ENCODE measurements at regions of chr17 and their contacts with region 1.

Region 1: DNA sequence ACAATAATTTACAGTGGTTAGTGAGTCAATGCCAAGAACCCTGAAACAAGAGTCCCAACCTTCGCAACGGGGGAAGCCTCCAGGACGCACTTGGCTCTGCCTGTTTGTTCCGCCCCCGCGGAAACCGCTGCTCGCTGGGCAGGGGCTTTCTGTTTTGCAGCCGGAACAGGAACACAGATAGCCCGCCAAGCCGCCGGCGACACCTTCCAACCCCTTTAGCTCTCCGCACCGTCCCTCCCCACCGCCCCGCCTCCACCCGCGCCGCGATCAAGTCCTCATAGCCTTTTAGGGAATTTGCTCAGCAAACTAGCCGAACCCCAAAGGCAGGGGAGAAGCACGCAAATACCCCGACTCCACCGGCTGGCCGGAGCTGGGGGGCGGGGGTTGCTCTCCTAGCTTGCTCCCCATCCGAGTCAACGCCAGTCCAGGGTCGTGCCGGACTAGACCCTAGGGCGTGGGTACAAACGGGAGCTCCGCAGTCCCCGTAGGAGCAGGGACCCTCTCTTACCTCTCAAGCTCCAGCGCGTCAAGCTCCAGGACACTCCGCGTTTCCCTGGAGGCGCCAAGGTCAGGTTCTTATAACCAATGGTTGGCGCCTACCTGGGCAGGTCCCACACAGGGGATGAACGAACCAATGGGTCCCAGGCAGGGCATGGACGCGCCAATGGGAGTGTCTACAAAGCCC is at the start of gene SLFN13:
- DNase-seq: peak; percentile 59 to 89 (median 74)
- ATAC-seq: peak; percentile 94
- H3K4me3 ChIP-seq: peak within 1 kb of the TSS; percentile 57
- H3K4me3 Mint-ChIP-seq: peak within 1 kb of the TSS; percentile 75 to 94 (median 87)
- H3K27ac ChIP-seq: peak within 1 kb of the TSS; percentile 69
- H3K27ac Mint-ChIP-seq: peak within 1 kb of the TSS; percentile 76 to 94 (median 83)
- H3K4me1 ChIP-seq: peaks cover 7 to 14% of the 10 kb centered on the region in 2 donors
- H3K4me1 Mint-ChIP-seq: peaks cover 0 to 33% (median 26%) of the 10 kb centered on the region in 7 donors
- H3K27me3 ChIP-seq: no peaks in the 10 kb centered on the region
- H3K27me3 Mint-ChIP-seq: no peaks in the 10 kb centered on the region
- total RNA-seq, gene SLFN13: 10.5 to 64.7 (median 21.0) TPM

Region 2: GRCh38 chr17:34434052-34434451 is 1014.3 kb before region 1 on chr17:
- CTCF ChIA-PET with region 1: no interaction called
- POLR2A ChIA-PET with region 1: no interaction called
- intact Hi-C with region 1: no loop called
- DNase-seq: no peak
- ATAC-seq: peak; percentile 78
- H3K4me3 ChIP-seq: no peak overlapping the region
- H3K4me3 Mint-ChIP-seq: no peak overlapping the region
- H3K27ac ChIP-seq: no peak overlapping the region
- H3K27ac Mint-ChIP-seq: no peak overlapping the region
- H3K4me1 ChIP-seq: no peaks in the 10 kb centered on the region
- H3K4me1 Mint-ChIP-seq: peaks cover 0 to 2% (median 0%) of the 10 kb centered on the region in 7 donors
- H3K27me3 ChIP-seq: no peaks in the 10 kb centered on the region
- H3K27me3 Mint-ChIP-seq: peaks cover 0 to 10% (median 9%) of the 10 kb centered on the region in 5 donors

Region 3: DNA sequence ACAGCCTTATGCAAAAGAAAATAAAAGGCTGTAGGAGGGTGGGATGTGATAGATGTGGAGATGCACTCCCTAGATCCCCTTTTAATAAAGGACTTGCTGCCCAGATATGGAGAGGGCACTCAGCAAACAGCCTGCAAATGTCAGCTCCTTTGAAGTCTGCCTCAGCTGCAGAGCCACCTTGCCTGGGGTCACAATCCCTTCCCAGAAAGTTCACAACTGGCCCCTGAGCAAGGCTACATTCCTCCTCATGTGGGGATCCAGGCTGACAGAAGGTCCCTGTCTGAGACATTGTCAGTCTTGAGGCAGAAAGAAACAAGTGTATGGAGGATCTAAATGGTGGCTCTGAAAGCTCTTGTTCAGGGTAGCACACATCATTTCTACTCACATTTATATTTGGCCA is 111.0 kb before region 1 on chr17:
- CTCF ChIA-PET with region 1: no interaction called
- POLR2A ChIA-PET with region 1: no interaction called
- intact Hi-C with region 1: no loop called
- DNase-seq: no peak
- ATAC-seq: no peak
- H3K4me3 ChIP-seq: no peak overlapping the region
- H3K4me3 Mint-ChIP-seq: no peak overlapping the region
- H3K27ac ChIP-seq: no peak overlapping the region
- H3K27ac Mint-ChIP-seq: no peak overlapping the region
- H3K4me1 ChIP-seq: peaks cover 0 to 15% of the 10 kb centered on the region in 2 donors
- H3K4me1 Mint-ChIP-seq: peaks cover 9 to 21% (median 10%) of the 10 kb centered on the region in 7 donors
- H3K27me3 ChIP-seq: no peaks in the 10 kb centered on the region
- H3K27me3 Mint-ChIP-seq: peaks cover 0 to 39% (median 0%) of the 10 kb centered on the region in 5 donors

Region 4: DNA sequence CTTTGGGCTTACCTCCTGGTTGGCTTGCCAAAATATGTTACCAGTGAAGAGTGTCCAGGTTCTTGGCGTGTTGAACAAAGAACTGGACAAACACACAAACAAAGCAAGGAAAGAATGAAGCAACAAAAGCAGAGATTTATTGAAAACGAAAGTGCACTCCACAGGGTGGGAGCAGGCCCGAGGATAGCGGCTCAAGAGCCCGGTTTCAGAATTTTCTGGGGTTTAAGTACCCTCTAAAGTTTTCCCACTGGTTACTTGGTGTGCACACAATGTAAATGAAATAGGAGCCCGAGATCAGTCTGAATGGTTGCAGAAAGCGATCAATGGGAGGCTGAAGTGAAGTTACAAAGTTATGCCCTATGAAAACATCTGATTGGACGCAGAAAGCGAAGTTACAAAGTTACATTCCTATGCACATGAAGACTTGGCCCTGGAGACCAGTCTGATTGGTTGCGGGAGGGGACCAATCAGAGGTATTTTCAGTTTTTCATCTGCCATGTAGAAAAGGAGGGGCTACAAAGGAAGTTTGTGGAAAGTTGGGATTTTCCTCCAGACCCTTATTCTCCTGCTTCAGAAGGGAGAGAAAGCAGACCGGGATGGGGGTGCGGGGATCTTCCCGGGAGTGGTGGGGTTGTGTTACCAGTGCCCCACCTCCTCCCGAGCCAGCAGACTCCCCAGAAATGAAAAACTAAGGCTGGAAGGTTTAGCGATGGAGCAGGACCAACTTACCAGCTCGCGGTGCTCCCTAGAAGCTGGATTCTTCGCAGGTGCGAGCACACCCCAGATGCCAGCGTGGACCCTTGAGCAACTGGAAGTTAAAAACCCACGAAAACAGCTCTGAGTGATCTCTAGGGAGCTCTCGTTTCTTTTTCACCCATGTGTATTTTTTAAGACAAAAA is 15.9 kb before region 1 on chr17 and contains the start of gene SLFN12:
- CTCF ChIA-PET with region 1: no interaction called
- POLR2A ChIA-PET with region 1: interaction called, 9 read pairs
- intact Hi-C with region 1: loop called (anchors 1 kb)
- DNase-seq: peak in 8 of 9 donors; percentile 31 to 75 (median 70)
- ATAC-seq: peak; percentile 95
- H3K4me3 ChIP-seq: peak within 1 kb of the TSS; percentile 70
- H3K4me3 Mint-ChIP-seq: peak within 1 kb of the TSS; percentile 86 to 100 (median 96)
- H3K27ac ChIP-seq: peak within 1 kb of the TSS; percentile 63
- H3K27ac Mint-ChIP-seq: peak within 1 kb of the TSS; percentile 82 to 94 (median 91)
- H3K4me1 ChIP-seq: peaks cover 16 to 28% of the 10 kb centered on the region in 2 donors
- H3K4me1 Mint-ChIP-seq: peaks cover 36 to 65% (median 59%) of the 10 kb centered on the region in 7 donors
- H3K27me3 ChIP-seq: no peaks in the 10 kb centered on the region
- H3K27me3 Mint-ChIP-seq: no peaks in the 10 kb centered on the region
- total RNA-seq, gene SLFN12: 4.2 to 14.9 (median 6.5) TPM

Region 5: DNA sequence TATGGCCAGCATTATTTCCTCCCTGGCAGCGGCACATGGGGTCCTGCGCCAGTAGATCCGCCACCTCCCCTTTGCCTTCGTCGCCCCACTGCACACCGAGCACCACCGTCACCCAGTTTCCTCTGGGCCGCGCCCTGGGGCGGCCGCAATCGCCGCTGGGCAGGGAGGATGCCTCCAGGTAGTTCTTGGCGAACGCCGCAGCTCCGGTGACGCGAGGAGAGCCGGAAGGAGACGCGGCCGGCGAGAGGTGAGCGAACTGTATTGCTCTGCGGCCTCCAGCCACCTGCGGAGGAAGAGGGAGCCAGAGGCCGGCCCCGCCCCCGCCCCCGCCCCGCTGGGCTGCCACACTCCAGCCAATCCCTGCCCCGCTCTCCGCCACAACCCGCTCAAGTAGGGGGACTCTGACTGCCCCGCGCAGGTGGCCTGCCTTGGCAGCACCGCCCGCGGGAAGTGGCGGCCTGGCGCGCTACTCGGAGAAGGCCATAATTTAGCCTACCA is 12.0 kb after region 1 on chr17:
- CTCF ChIA-PET with region 1: no interaction called
- POLR2A ChIA-PET with region 1: interaction called, 4 read pairs
- intact Hi-C with region 1: loop called in 1 of 2 experiments (anchors 1 kb)
- DNase-seq: peak; percentile 31 to 68 (median 58)
- ATAC-seq: peak; percentile 95
- H3K4me3 ChIP-seq: peak overlapping the region; percentile 46
- H3K4me3 Mint-ChIP-seq: peak overlapping the region; percentile 64 to 88 (median 81)
- H3K27ac ChIP-seq: peak overlapping the region; percentile 31
- H3K27ac Mint-ChIP-seq: peak overlapping the region; percentile 78 to 95 (median 86)
- H3K4me1 ChIP-seq: peaks cover 7 to 14% of the 10 kb centered on the region in 2 donors
- H3K4me1 Mint-ChIP-seq: peaks cover 17 to 44% (median 34%) of the 10 kb centered on the region in 7 donors
- H3K27me3 ChIP-seq: no peaks in the 10 kb centered on the region
- H3K27me3 Mint-ChIP-seq: no peaks in the 10 kb centered on the region

Region 6: GRCh38 chr17:35879773-35880654 is 431.7 kb after region 1 on chr17 and contains the start of gene CCL5:
- CTCF ChIA-PET with region 1: no interaction called
- POLR2A ChIA-PET with region 1: no interaction called
- intact Hi-C with region 1: no loop called
- DNase-seq: peak in 1 of 9 donors; percentile 61
- ATAC-seq: peak; percentile 92
- H3K4me3 ChIP-seq: peak within 1 kb of the TSS; percentile 31
- H3K4me3 Mint-ChIP-seq: peak within 1 kb of the TSS in 4 of 10 donors; percentile 10 to 86 (median 64)
- H3K27ac ChIP-seq: no peak within 1 kb of the TSS
- H3K27ac Mint-ChIP-seq: peak within 1 kb of the TSS in 3 of 9 donors; percentile 11 to 91 (median 12)
- H3K4me1 ChIP-seq: peaks cover 6 to 25% of the 10 kb centered on the region in 2 donors
- H3K4me1 Mint-ChIP-seq: peaks cover 6 to 50% (median 15%) of the 10 kb centered on the region in 7 donors
- H3K27me3 ChIP-seq: no peaks in the 10 kb centered on the region
- H3K27me3 Mint-ChIP-seq: peaks cover 0 to 8% (median 0%) of the 10 kb centered on the region in 5 donors
- total RNA-seq, gene CCL5: 17.0 to 192 (median 29.1) TPM

Measured in naive thymus-derived CD4-positive, alpha-beta T cell (primary cell).